ENCODE measurements at regions of chr13 and their contacts with region 1.

Region 1: GRCh38 chr13:75258159-75258782 is 223.7 kb downstream of the TBC1D4 start:
- DNase-seq: peak; percentile 50
- H3K4me3 ChIP-seq: no peak overlapping the region
- H3K27ac ChIP-seq: no peak overlapping the region
- H3K4me1 ChIP-seq: peaks cover 3% of the 10 kb centered on the region
- H3K27me3 ChIP-seq: peaks cover 7% of the 10 kb centered on the region
- CTCF ChIP-seq: peak; percentile 74 to 78

Region 2: DNA sequence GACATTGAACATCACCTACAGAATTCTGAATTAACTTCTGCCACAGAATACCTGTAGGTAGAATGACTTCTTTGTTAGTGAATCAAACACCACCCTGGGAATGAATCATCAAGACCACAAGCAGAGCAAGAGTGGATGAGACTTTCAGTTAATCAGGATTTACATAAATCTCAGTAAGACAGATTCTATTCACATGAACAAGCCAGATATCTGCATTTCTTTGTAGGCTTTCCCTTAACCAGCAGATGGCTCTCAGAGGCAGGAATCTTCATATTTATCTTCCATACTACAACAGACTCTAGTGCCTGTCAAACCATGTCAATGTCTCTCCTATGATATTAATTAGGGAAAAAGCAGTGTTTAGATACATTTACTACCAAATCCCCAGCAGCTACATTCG is 1536.2 kb before region 1 on chr13:
- CTCF ChIA-PET with region 1: no interaction called
- dilution Hi-C with region 1: no loop called
- in situ Hi-C with region 1: no loop called
- intact Hi-C with region 1: loop called (anchors 1 kb)
- DNase-seq: peak; percentile 94
- H3K4me3 ChIP-seq: no peak overlapping the region
- H3K27ac ChIP-seq: peak overlapping the region; percentile 80
- H3K4me1 ChIP-seq: peaks cover 33% of the 10 kb centered on the region
- H3K27me3 ChIP-seq: no peaks in the 10 kb centered on the region
- CTCF ChIP-seq: peak; percentile 43 to 56

Region 3: GRCh38 chr13:73754727-73755292 is 1503.5 kb before region 1 on chr13:
- CTCF ChIA-PET with region 1: no interaction called
- dilution Hi-C with region 1: no loop called
- in situ Hi-C with region 1: no loop called
- intact Hi-C with region 1: loop called (anchors 5 kb)
- DNase-seq: peak; percentile 50
- H3K4me3 ChIP-seq: no peak overlapping the region
- H3K27ac ChIP-seq: no peak overlapping the region
- H3K4me1 ChIP-seq: no peaks in the 10 kb centered on the region
- H3K27me3 ChIP-seq: no peaks in the 10 kb centered on the region
- CTCF ChIP-seq: peak; percentile 57 to 72

Region 4: GRCh38 chr13:73835138-73835721 is 1423.0 kb before region 1 on chr13:
- CTCF ChIA-PET with region 1: no interaction called
- dilution Hi-C with region 1: no loop called
- in situ Hi-C with region 1: no loop called
- intact Hi-C with region 1: loop called (anchors 5 kb)
- DNase-seq: peak; percentile 36
- H3K4me3 ChIP-seq: no peak overlapping the region
- H3K27ac ChIP-seq: no peak overlapping the region
- H3K4me1 ChIP-seq: no peaks in the 10 kb centered on the region
- H3K27me3 ChIP-seq: no peaks in the 10 kb centered on the region
- CTCF ChIP-seq: peak; percentile 54 to 61